ENCODE measurements at regions of chr14 and their contacts with region 1.

Region 1: DNA sequence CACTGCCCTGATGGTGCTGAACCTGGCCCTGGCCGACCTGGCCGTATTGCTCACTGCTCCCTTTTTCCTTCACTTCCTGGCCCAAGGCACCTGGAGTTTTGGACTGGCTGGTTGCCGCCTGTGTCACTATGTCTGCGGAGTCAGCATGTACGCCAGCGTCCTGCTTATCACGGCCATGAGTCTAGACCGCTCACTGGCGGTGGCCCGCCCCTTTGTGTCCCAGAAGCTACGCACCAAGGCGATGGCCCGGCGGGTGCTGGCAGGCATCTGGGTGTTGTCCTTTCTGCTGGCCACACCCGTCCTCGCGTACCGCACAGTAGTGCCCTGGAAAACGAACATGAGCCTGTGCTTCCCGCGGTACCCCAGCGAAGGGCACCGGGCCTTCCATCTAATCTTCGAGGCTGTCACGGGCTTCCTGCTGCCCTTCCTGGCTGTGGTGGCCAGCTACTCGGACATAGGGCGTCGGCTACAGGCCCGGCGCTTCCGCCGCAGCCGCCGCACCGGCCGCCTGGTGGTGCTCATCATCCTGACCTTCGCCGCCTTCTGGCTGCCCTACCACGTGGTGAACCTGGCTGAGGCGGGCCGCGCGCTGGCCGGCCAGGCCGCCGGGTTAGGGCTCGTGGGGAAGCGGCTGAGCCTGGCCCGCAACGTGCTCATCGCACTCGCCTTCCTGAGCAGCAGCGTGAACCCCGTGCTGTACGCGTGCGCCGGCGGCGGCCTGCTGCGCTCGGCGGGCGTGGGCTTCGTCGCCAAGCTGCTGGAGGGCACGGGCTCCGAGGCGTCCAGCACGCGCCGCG is 4.7 kb downstream of the LTB4R start:
- DNase-seq: peak in 1 of 3 donors; percentile 28
- H3K4me3 ChIP-seq: no peak overlapping the region
- H3K27ac ChIP-seq: no peak overlapping the region
- H3K4me1 ChIP-seq: peaks cover 18 to 59% (median 52%) of the 10 kb centered on the region in 4 experiments
- H3K27me3 ChIP-seq: no peaks in the 10 kb centered on the region

Region 2: DNA sequence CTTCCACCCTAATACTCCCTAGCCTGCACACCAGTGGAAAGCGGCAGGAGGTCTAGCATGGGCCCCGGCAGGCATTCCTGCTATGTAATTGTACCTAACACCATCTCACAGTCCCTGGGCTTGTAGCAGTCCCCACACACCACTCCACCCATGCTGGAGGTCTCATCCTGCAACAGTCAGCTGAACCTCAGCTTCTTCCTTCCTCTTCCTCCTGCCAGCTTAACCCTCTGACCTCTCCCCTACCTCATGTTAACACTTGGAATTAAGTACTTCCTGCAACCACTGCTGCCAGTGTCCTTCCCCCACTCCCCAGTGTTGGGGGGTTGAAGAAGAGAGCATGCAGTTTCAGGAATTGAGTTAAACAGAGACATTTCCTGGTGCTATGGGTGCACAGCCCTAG is 11.3 kb after region 1 on chr14:
- CTCF ChIA-PET with region 1: interaction called, 391 read pairs
- POLR2A ChIA-PET with region 1: interaction called, 5 read pairs
- DNase-seq: no peak
- H3K4me3 ChIP-seq: peak overlapping the region in 2 of 7 experiments; percentile 28
- H3K27ac ChIP-seq: no peak overlapping the region
- H3K4me1 ChIP-seq: peaks cover 9 to 59% (median 45%) of the 10 kb centered on the region in 4 experiments
- H3K27me3 ChIP-seq: peaks cover 0 to 5% (median under 1%) of the 10 kb centered on the region in 5 experiments

Region 3: DNA sequence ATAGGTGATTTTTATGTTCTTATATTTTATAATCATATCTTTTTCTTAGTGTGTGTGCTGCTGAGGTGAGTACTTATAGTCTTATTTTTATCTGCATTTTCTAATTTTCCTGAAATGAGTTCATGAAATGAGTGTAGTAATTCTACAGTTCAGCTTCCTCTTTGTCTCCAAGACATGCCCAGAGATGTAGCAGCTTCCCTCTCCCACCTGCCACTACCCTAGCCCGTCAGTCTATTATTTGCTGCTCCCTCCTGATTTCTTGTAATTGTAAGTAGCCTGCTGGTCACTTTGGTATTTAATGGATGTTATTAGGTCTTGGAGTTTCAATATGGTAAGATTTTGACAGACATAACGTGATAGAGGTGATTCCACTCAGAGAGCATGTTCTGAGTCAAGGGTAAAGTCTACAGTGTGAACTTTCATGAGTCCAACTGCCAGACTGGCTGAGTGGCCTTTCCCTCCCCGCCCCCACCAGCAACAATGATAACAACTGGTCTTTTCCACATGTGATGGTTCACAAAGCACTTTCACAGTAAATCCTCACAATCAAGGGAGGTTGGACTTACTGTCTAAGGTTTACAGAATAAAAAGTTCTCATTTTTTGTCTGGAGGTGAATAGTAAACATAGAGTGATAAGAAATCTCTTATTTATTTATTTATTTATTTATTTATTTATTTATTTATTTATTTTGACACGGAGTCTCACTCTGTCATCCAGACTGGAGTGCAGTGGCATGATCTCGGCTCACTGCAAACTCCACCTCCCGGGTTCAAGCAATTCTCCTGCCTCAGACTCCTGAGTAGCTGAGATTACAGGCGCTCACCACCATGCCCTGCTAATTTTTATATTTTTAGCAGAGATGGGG is 28.0 kb after region 1 on chr14:
- CTCF ChIA-PET with region 1: no interaction called
- POLR2A ChIA-PET with region 1: no interaction called
- DNase-seq: no peak
- H3K4me3 ChIP-seq: no peak overlapping the region
- H3K27ac ChIP-seq: no peak overlapping the region
- H3K4me1 ChIP-seq: peaks cover 0 to 14% (median 11%) of the 10 kb centered on the region in 4 experiments
- H3K27me3 ChIP-seq: peaks cover 0 to 2% (median 0%) of the 10 kb centered on the region in 5 experiments

Measured in common myeloid progenitor, CD34-positive (primary cell).